ENCODE measurements at regions of chr2 and their contacts with region 1.

Region 1: GRCh38 chr2:154827286-154827685 is 128.8 kb downstream of the KCNJ3 start:
- DNase-seq: no peak
- ATAC-seq: no peak

Region 2: DNA sequence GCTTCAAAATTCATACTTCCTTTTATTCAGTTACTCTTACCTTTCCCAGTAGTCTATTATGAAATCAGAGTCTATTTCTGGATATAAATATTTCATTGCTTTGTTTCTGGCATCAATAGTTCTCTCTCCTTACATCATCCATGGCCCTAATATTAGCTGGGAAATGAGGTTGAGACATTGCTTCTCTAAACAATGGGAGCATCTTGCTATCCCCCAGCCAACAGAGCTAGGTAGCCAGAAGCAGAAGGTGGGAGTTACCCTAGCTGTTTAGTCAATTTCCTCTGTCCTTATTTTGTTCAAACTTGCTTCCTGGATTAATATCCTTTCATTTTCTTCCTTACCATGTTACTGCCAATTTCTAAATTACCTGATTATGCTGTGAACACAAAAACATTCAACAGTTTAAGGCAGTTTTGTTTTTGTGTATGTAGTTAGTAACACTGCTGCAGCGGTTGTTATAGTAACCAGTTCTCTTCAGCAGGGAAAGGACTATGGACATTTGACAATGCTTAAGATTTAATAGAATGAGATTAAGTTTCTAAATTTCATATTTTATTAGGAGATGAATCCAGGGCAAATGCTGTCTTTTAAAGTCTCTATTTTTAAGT is 289.3 kb before region 1 on chr2:
- intact Hi-C with region 1: loop called (anchors 10 kb)
- DNase-seq: no peak
- ATAC-seq: peak; percentile 39

Region 3: DNA sequence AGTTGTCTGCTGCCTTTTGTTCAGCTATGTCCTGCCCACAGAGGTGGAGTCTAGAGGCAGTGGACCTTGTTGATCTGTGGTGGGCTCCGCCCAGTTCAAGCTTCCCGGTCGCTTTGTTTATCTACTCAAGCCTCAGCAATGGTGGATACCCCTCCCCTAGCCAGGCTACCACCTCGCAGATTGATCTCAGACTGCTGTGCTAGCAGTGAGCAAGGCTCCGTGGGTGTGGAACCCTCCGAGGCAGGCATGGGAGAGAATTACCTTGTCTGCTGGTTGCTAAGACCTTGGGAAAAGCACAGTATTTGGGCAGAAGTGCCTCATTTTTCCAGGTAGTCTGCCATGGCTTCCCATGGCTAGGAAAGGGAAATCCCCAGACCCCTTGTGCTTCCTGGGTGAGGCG is 17.2 kb after region 1 on chr2:
- intact Hi-C with region 1: no loop called
- DNase-seq: no peak
- ATAC-seq: no peak